OCI-LY7 (cell line): ENCODE measurements at regions of chr12 and their contacts with region 1.

Region 1: DNA sequence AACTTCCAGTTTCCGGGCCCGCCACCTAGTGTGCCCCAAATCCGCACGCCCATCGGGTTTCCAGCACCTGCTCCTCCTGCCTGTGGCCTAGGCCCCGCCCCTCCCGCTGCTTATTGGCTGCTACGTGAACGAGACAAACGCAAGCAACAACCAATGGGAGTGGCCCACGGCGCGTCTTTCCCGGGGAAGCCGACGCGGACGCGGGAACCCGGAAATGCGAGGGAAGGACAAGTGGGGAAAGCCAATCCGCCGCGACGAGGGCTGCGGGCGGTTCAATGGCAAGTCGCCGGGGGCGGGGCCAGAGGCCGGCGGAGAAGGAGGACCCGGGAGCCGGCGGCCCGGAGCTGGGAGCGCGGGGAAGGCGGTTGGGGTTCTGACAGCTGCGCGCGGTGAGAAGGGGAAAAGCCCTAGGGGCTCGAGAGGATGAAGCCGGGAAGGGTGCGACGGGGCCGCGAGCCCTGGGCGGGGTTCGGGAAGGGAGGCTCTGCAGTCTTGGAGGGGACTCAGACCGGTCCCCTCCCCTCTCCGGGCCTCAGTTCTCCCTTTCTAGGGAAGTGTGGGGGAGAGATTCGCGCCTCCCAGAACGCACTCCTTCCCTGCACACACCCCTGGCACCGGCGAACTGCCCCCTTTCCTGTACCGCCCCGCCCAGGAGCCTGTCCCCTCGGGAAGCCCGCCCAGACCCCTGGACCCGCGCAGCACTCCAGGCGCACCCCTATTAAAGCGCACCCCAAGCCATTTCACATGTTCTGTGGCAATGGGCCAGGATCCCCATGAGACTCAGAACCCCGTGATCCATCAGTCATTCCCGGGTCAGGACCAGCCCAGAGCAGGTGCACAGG is at the start of gene FICD:
- DNase-seq: peak; percentile 99
- H3K4me3 ChIP-seq: peak within 1 kb of the TSS; percentile 84
- H3K27ac ChIP-seq: no peak within 1 kb of the TSS
- H3K4me1 ChIP-seq: peaks cover 20% of the 10 kb centered on the region
- CTCF ChIP-seq: no peak
- total RNA-seq, gene FICD: 8.4 and 13.1 TPM in 2 replicates

Region 2: DNA sequence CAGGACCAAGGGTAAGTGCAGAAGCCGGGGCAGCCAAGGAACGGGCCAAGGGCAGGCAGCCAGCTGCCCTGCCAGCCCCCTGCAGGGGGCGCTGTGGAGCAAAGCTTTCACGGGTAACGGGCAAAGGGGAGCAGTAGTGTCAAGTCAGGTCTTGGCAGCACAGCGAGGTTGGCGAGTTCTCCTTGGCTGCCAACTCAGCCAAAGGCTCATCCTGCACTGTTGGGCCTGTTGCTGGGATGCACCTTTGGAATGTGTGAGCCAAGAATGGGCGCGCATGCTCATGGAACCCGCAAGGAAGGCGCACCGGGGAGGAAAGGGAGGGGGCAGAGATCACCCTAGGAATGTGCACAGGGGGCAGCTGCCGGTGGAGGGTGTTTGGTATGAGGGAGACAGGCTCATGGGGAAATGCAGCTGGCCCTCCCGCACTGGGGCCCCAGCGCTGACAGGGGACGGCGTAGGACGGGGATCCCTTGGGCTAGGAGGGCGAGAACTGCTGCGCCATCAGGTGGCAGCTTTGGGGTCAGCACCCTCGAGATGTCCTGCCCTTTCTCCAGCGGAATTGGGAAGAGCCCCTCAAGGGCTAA is 602.7 kb before region 1 on chr12:
- CTCF ChIA-PET with region 1: no interaction called
- POLR2A ChIA-PET with region 1: no interaction called
- intact Hi-C with region 1: loop called (anchors 10 kb)
- DNase-seq: peak; percentile 14
- H3K4me3 ChIP-seq: no peak overlapping the region
- H3K27ac ChIP-seq: no peak overlapping the region
- H3K4me1 ChIP-seq: no peaks in the 10 kb centered on the region
- CTCF ChIP-seq: peak; percentile 78

Region 3: GRCh38 chr12:107992870-107993451 is 522.2 kb before region 1 on chr12:
- CTCF ChIA-PET with region 1: interaction called, 3 read pairs
- POLR2A ChIA-PET with region 1: no interaction called
- intact Hi-C with region 1: loop called (anchors 5 kb)
- DNase-seq: peak; percentile 40
- H3K4me3 ChIP-seq: no peak overlapping the region
- H3K27ac ChIP-seq: no peak overlapping the region
- H3K4me1 ChIP-seq: no peaks in the 10 kb centered on the region
- CTCF ChIP-seq: peak; percentile 62

Region 4: DNA sequence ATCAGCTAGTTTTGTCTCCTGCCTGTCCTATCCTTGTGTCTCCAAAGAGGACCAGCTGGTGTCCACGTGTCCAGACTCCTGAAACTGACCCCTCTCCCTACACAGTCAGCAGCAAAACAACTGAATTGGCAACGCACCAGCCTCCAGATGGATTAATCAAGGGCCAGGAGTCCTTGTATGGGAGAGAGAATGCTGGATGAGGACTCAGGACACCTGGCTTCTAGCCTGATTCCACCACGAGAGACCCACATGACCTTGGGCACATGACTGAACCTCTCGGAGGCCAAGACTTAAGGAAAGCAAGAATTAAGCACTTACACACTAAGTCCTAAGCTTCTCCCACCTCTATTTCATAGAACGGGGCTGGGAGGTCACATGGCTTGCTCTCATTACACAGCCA is 115.7 kb before region 1 on chr12:
- CTCF ChIA-PET with region 1: no interaction called
- POLR2A ChIA-PET with region 1: no interaction called
- intact Hi-C with region 1: no loop called
- DNase-seq: no peak
- H3K4me3 ChIP-seq: no peak overlapping the region
- H3K27ac ChIP-seq: no peak overlapping the region
- H3K4me1 ChIP-seq: no peaks in the 10 kb centered on the region
- CTCF ChIP-seq: no peak

Region 5: GRCh38 chr12:108430245-108430644 is 84.9 kb before region 1 on chr12:
- CTCF ChIA-PET with region 1: no interaction called
- POLR2A ChIA-PET with region 1: no interaction called
- intact Hi-C with region 1: no loop called
- DNase-seq: no peak
- H3K4me3 ChIP-seq: no peak overlapping the region
- H3K27ac ChIP-seq: no peak overlapping the region
- H3K4me1 ChIP-seq: no peaks in the 10 kb centered on the region
- CTCF ChIP-seq: no peak

Region 6: GRCh38 chr12:108526482-108527165 is 11.4 kb after region 1 on chr12:
- CTCF ChIA-PET with region 1: no interaction called
- POLR2A ChIA-PET with region 1: no interaction called
- intact Hi-C with region 1: no loop called
- DNase-seq: no peak
- H3K4me3 ChIP-seq: no peak overlapping the region
- H3K27ac ChIP-seq: no peak overlapping the region
- H3K4me1 ChIP-seq: no peaks in the 10 kb centered on the region
- CTCF ChIP-seq: no peak

Region 7: DNA sequence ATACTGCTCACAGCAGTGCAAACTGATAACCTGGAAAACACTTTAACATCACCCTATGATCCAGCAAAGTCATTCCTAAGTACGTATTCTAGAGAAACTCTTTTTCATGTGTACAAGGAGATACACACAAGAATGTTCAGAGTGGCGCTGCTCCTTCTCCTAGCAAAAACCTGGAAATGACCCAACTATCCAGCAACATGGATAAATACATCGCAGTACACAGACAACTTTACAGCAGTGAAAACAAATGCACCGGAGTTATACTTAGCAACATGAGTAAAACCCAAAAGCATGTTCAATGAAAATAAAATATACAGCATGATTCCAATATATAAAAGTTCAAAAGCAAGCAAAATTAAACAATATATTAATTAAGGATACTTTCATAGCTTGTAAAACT is 27.1 kb after region 1 on chr12:
- CTCF ChIA-PET with region 1: no interaction called
- POLR2A ChIA-PET with region 1: no interaction called
- intact Hi-C with region 1: no loop called
- DNase-seq: no peak
- H3K4me3 ChIP-seq: peak overlapping the region; percentile 55
- H3K27ac ChIP-seq: peak overlapping the region; percentile 95
- H3K4me1 ChIP-seq: peaks cover 43% of the 10 kb centered on the region
- CTCF ChIP-seq: no peak

Region 8: GRCh38 chr12:108618079-108618952 is 103.1 kb after region 1 on chr12:
- CTCF ChIA-PET with region 1: no interaction called
- POLR2A ChIA-PET with region 1: no interaction called
- intact Hi-C with region 1: loop called (anchors 5 kb)
- DNase-seq: peak; percentile 88
- H3K4me3 ChIP-seq: no peak overlapping the region
- H3K27ac ChIP-seq: peak overlapping the region; percentile 61
- H3K4me1 ChIP-seq: peaks cover 37% of the 10 kb centered on the region
- CTCF ChIP-seq: peak; percentile 100